KBM-7 (cell line): ENCODE measurements at regions of chr1 and their contacts with region 1.

Region 1: DNA sequence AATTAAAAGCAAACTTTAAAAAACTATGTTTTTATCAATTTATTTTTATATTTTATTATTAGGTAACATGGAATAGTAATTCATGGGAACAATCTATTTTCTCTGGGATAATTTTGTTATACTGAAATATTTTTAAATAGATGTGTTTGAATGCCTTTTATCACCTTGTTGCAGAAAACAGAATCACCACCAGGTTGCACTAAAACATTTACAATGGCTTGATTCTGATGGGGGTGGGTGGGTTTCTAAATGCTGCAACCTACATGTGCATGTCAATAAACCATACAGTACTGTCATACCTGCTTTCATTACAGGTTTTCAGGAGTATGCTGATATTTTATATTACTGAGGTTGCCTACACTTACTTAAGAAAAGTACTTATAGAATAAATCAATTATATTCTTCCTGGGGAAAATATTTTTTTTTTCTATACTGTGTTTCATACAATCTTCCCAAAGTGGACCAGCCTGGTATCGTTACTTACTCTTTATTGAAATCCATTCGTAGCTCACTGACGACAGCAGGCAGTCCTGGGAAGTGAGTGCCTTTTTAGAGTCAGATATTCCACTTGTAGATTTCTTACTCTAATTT is 132.8 kb downstream of the PTPRC start:
- DNase-seq: peak; percentile 78

Region 2: DNA sequence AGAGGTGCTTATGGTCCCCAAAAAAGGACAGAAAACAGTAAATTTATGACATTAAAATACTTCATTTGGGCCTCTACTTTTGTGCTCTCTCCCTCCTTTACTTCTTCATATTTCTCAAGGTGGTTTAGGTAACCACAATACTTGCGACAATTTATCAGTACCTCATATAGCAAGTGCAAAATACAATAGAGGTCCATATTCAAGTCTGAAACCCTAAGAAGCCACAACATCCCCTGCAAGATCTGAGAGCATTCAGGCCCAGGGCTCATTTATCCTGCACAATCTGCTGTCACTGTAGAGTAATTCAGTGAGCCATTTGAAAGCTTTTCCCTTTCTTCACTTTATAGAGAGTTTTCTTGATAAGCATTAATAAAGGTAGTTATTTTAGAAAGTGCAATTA is 206.9 kb before region 1 on chr1:
- in situ Hi-C with region 1: no loop called
- DNase-seq: no peak

Region 3: GRCh38 chr1:199463521-199464128 is 692.0 kb after region 1 on chr1:
- in situ Hi-C with region 1: loop called (anchors 25 kb)
- DNase-seq: peak; percentile 59

Region 4: DNA sequence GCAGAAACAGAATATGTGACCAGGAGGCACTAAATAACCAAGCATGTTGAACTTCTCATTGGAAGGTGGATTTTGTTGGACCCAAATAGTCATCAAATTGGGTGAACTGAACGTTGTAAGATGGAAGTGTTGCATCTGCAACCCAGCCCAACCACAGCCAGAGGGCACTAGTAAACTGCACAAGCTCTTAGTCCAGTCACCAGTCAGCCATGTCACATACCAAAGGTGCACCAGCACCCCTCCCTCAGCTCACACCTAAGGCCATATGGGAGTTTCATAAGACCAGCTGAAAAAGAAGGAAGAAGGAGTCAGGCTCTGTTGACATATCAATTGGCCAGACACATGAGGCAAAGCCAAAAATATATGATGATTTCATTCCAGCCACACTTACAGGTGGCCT is 774.1 kb after region 1 on chr1:
- in situ Hi-C with region 1: loop called (anchors 25 kb)
- DNase-seq: peak; percentile 27